Heart right ventricle (tissue), 16 donors: ENCODE measurements at regions of chr10 and their contacts with region 1.

Region 1: GRCh38 chr10:102420810-102421644 is at the start of gene FBXL15:
- DNase-seq: peak; percentile 94 to 97
- ATAC-seq: peak; percentile 87 to 96 (median 92)
- H3K4me3 ChIP-seq: peak within 1 kb of the TSS; percentile 80 to 100 (median 94)
- H3K27ac ChIP-seq: peak within 1 kb of the TSS; percentile 70 to 97 (median 91)
- H3K4me1 ChIP-seq: peaks cover 15 to 40% (median 36%) of the 10 kb centered on the region in 9 donors
- H3K27me3 ChIP-seq: peaks cover 0 to 32% (median 30%) of the 10 kb centered on the region in 7 donors
- CTCF ChIP-seq: peak in 1 of 9 donors; percentile 3
- total RNA-seq, gene FBXL15: 6.7 to 10.5 (median 9.9) TPM

Region 2: DNA sequence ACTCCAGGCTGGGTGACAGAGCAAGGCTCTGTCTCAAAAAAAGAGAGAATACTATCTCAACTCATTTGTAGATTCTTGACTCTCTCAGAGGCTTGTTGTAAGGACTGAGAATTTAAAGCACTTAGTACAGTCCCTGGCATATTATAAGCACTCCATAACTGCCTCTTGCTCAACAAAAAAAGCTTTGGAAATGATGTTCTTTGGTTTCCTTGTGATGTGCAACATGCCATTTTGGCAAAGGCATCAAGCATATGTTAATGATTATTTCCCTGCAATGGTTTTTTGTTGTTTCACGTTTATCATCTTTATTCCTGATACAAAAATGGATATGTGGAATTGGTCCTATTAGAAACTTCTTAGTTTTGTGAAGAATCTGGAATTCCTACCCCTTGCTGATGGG is 253.2 kb before region 1 on chr10:
- intact Hi-C with region 1: loop called in 1 of 10 experiments (anchors 1 kb)
- DNase-seq: no peak
- ATAC-seq: no peak
- H3K4me3 ChIP-seq: no peak overlapping the region
- H3K27ac ChIP-seq: no peak overlapping the region
- H3K4me1 ChIP-seq: peaks cover 0 to 12% (median 4%) of the 10 kb centered on the region in 9 donors
- H3K27me3 ChIP-seq: no peaks in the 10 kb centered on the region
- CTCF ChIP-seq: no peak

Region 3: DNA sequence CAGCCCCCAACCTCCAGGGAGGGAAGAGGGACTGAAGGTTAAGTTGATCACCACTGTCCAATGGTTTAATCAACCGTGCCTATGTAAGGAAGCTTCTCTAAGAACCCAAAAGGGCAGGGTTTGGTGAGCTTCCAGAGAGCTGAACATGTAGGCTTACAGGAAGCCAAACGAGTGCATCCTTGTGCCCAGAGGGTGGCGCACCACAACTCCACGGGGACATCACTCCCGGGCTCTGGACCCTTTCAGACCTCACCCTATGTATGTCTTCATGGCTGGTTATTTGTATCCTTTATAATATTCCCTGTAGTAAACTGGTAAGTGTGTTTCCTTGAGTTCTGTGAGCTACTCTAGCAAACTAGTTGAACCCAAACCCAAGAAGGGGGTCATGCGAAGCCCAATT is 37.0 kb before region 1 on chr10:
- intact Hi-C with region 1: no loop called
- DNase-seq: no peak
- ATAC-seq: peak in 1 of 8 donors; percentile 47
- H3K4me3 ChIP-seq: no peak overlapping the region
- H3K27ac ChIP-seq: no peak overlapping the region
- H3K4me1 ChIP-seq: peaks cover 0 to 14% (median 0%) of the 10 kb centered on the region in 9 donors
- H3K27me3 ChIP-seq: no peaks in the 10 kb centered on the region
- CTCF ChIP-seq: peak in 2 of 9 donors; percentile 15 to 16

Region 4: GRCh38 chr10:102394079-102394800 is 26.8 kb before region 1 on chr10:
- intact Hi-C with region 1: loop called in 1 of 10 experiments (anchors 2 kb)
- DNase-seq: peak; percentile 95 to 97
- ATAC-seq: peak; percentile 91 to 94 (median 92)
- H3K4me3 ChIP-seq: peak overlapping the region; percentile 48 to 90 (median 69)
- H3K27ac ChIP-seq: peak overlapping the region; percentile 91 to 98 (median 96)
- H3K4me1 ChIP-seq: peaks cover 4 to 48% (median 25%) of the 10 kb centered on the region in 9 donors
- H3K27me3 ChIP-seq: no peaks in the 10 kb centered on the region
- CTCF ChIP-seq: peak in 6 of 9 donors; percentile 46 to 99 (median 98)

Region 5: GRCh38 chr10:102461187-102462054 is 40.4 kb after region 1 on chr10:
- intact Hi-C with region 1: loop called in 1 of 10 experiments (anchors 5 kb)
- DNase-seq: peak; percentile 90 to 94
- ATAC-seq: peak; percentile 95 to 98 (median 97)
- H3K4me3 ChIP-seq: peak overlapping the region; percentile 19 to 65 (median 62)
- H3K27ac ChIP-seq: peak overlapping the region in 4 of 10 donors; percentile 35 to 62 (median 49)
- H3K4me1 ChIP-seq: peaks cover 0 to 36% (median 12%) of the 10 kb centered on the region in 9 donors
- H3K27me3 ChIP-seq: no peaks in the 10 kb centered on the region
- CTCF ChIP-seq: no peak

Region 6: GRCh38 chr10:102476466-102477141 is 55.6 kb after region 1 on chr10:
- intact Hi-C with region 1: loop called in 1 of 10 experiments (anchors 10 kb)
- DNase-seq: no peak
- ATAC-seq: no peak
- H3K4me3 ChIP-seq: no peak overlapping the region
- H3K27ac ChIP-seq: no peak overlapping the region
- H3K4me1 ChIP-seq: peaks cover 4 to 16% (median 11%) of the 10 kb centered on the region in 9 donors
- H3K27me3 ChIP-seq: no peaks in the 10 kb centered on the region
- CTCF ChIP-seq: no peak

Region 7: DNA sequence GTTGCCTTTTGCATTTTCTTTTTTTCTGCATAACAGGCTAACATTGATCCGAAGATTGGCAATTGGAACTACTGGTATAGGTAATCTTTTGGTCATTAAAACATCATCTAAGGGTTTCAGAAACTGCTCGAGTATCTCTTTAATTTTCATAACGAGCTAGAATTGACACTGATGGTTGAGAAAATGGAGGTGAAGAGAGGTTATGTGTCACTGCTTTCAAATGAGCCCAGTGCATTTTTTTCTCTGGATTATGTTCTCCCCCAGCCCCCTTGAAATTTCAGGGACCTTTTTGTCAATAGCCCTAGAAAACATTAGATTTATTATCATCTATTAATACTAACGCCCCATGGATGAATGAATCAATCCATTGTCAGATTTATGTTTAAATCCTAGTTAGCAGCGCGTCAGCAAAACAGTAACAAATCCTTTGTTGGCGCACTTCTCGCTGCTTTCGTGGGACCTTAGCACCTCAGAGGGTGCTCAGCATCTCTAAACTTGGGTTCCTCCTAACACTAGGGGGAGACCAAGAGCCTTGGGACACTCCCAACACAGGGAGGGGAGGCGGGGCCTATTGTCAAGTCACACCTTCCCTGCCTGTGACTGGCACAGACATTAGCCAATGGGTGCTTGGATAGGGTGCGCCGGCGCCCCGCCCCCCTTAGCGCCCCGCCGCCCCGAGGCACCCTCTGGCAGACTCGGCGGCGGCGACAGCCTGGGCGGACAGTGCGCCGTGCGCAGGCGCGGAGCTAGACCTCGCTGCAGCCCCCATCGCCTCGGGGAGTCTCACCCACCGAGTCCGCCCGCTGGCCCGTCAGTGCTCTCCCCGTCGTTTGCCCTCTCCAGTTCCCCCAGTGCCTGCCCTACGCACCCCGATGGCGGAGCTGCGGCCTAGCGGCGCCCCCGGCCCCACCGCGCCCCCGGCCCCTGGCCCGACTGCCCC is 82.5 kb after region 1 on chr10 and contains the start of gene SUFU:
- intact Hi-C with region 1: loop called in 2 of 10 experiments (anchors 5 kb)
- DNase-seq: peak; percentile 96 to 99
- ATAC-seq: peak; percentile 80 to 90 (median 84)
- H3K4me3 ChIP-seq: peak within 1 kb of the TSS; percentile 66 to 99 (median 88)
- H3K27ac ChIP-seq: peak within 1 kb of the TSS in 9 of 10 donors; percentile 79 to 96 (median 94)
- H3K4me1 ChIP-seq: peaks cover 11 to 69% (median 47%) of the 10 kb centered on the region in 9 donors
- H3K27me3 ChIP-seq: no peaks in the 10 kb centered on the region
- CTCF ChIP-seq: peak; percentile 89 to 99 (median 94)
- total RNA-seq, gene SUFU: 5.7 to 10.1 (median 7.5) TPM

Region 8: DNA sequence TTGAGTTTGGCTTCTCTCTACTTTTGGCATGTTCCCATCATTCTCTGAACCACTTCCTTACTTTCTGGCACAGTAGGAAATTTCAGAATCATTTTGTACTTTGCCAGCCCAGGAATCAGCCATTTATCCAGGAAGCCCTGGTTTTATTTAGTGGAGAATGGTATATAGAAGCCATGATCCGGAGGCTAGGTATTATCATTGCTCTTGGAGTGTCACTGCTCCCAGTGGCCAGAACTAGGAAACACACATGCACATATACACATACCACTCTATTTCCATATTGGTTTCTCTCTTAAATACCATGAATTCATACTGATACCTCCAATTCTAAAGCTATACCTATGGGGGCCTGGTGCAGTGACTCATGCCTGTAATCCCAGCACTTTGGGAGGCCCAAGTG is 119.0 kb after region 1 on chr10:
- intact Hi-C with region 1: no loop called
- DNase-seq: no peak
- ATAC-seq: no peak
- H3K4me3 ChIP-seq: no peak overlapping the region
- H3K27ac ChIP-seq: no peak overlapping the region
- H3K4me1 ChIP-seq: peaks cover 0 to 7% (median 0%) of the 10 kb centered on the region in 9 donors
- H3K27me3 ChIP-seq: no peaks in the 10 kb centered on the region
- CTCF ChIP-seq: peak in 5 of 9 donors; percentile 7 to 35 (median 26)